Prostate gland (tissue), 2 donors: ENCODE measurements at regions of chr16 and their contacts with region 1.

Region 1: DNA sequence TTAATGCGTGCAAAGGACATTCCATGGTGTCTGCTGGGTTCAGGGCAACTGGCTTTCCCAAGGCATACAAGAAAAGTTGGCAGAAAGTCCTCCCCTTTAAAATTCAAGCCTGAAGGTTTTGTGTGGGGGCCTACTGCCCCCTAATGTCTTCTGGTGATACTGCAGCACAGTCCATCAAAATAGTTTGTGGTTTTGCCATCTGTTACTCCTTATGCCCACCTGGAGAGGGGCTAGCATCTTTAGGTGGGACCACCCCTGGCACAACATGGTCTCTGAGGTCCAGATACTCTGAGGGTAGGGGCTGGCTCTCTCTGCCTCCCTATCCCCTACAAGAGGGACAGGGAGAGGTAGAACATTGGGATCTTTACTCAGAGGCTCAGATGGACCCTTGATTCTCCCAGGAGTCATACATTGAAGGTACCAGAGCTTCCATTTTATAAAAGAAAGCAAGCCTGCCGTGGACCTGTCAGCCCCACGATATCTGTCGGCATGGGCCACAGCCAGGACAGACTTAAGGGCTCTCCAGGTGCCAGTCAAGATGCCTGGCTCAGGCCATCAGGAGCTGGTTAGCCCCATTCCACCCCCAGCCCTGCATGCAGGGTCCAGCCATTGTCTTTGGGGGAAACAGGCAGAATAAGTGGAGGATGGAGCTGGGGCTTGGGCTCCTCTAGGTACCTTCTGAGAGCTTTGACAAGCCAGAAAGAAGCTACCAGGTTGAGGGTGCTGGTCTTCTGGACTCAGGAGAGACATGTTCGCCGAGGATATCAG is 6.3 kb downstream of the ESRP2 start:
- DNase-seq: peak; percentile 48
- H3K4me3 ChIP-seq: no peak overlapping the region
- H3K27ac ChIP-seq: peak overlapping the region; percentile 67 to 74
- H3K4me1 ChIP-seq: peaks cover 39% of the 10 kb centered on the region
- H3K27me3 ChIP-seq: no peaks in the 10 kb centered on the region
- CTCF ChIP-seq: peak; percentile 64 to 94 (median 88)
- POLR2A ChIP-seq: no peak

Region 2: GRCh38 chr16:67993189-67994039 is 236.2 kb before region 1 on chr16:
- intact Hi-C with region 1: loop called (anchors 5 kb)
- DNase-seq: peak; percentile 44
- H3K4me3 ChIP-seq: peak overlapping the region; percentile 18 to 21
- H3K27ac ChIP-seq: peak overlapping the region in 1 of 2 donors; percentile 9
- H3K4me1 ChIP-seq: peaks cover 6% of the 10 kb centered on the region
- H3K27me3 ChIP-seq: no peaks in the 10 kb centered on the region
- CTCF ChIP-seq: peak; percentile 94 to 98 (median 97)
- POLR2A ChIP-seq: no peak

Region 3: DNA sequence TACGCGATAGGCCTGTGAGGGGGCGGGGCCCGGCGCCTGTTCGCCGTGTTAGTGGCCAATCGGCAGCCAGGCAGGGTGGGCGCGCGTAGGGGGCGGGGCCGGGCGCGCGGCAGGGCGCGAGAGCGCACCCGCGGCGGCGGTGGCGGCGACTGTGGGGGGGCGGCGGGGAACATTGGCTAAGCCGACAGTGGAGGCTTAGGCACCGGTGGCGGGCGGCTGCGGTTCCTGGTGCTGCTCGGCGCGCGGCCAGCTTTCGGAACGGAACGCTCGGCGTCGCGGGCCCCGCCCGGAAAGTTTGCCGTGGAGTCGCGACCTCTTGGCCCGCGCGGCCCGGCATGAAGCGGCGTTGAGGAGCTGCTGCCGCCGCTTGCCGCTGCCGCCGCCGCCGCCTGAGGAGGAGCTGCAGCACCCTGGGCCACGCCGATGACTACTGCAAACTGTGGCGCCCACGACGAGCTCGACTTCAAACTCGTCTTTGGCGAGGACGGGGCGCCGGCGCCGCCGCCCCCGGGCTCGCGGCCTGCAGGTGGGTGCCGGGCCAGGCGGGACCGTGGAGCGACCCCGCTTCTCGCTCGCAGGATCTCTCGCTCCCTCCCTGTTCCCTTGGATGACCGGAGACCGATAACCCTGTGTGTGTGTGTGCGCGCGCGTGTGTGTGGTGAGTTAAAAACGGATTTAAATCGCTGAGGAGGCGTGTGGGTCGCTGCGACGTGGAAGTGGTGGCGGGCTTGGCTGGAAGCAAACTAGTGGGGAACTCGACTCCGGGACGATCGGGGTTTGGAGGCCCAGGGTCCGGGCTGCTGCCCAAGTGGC is 144.2 kb before region 1 on chr16 and contains the start of gene NFATC3:
- intact Hi-C with region 1: loop called (anchors 2 kb)
- DNase-seq: peak; percentile 98
- H3K4me3 ChIP-seq: peak within 1 kb of the TSS; percentile 81 to 92
- H3K27ac ChIP-seq: peak within 1 kb of the TSS; percentile 95
- H3K4me1 ChIP-seq: peaks cover 6% of the 10 kb centered on the region
- H3K27me3 ChIP-seq: no peaks in the 10 kb centered on the region
- CTCF ChIP-seq: no peak
- POLR2A ChIP-seq: peak; percentile 73
- total RNA-seq, gene NFATC3: 36.6 to 84.1 TPM